Endothelial cell of umbilical vein (primary cell): ENCODE measurements at regions of chr1 and their contacts with region 1.

Region 1: GRCh38 chr1:219573960-219574359 is 38.9 kb downstream of the ZC3H11B start:
- DNase-seq: no peak
- H3K4me3 ChIP-seq: no peak overlapping the region
- H3K27ac ChIP-seq: no peak overlapping the region
- H3K4me1 ChIP-seq: no peaks in the 10 kb centered on the region
- H3K27me3 ChIP-seq: no peaks in the 10 kb centered on the region
- CTCF ChIP-seq: no peak
- POLR2A ChIP-seq: no peak

Region 2: DNA sequence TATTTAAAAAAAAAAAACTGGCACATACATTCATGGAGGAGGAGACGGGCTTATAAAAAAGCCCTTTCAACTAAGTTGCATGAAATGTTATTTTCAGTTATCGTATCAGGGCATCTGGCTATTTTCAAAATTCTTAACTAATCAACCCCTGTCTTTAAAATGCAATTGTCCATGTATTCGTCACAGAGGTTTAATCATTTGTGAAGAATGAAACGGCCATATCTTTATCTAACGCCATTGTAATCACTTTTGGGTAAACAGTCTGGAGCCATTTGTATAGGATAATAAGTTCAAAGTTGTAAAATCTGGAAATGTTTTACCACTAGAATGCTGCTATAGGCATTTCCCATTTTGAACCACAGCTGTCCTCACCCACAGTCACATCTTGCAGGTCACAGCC is 324.0 kb after region 1 on chr1:
- CTCF ChIA-PET with region 1: no interaction called
- POLR2A ChIA-PET with region 1: no interaction called
- dilution Hi-C with region 1: no loop called
- intact Hi-C with region 1: loop called (anchors 5 kb)
- DNase-seq: no peak
- H3K4me3 ChIP-seq: no peak overlapping the region
- H3K27ac ChIP-seq: no peak overlapping the region
- H3K4me1 ChIP-seq: peaks cover 4% of the 10 kb centered on the region
- H3K27me3 ChIP-seq: no peaks in the 10 kb centered on the region
- CTCF ChIP-seq: no peak
- POLR2A ChIP-seq: no peak

Region 3: DNA sequence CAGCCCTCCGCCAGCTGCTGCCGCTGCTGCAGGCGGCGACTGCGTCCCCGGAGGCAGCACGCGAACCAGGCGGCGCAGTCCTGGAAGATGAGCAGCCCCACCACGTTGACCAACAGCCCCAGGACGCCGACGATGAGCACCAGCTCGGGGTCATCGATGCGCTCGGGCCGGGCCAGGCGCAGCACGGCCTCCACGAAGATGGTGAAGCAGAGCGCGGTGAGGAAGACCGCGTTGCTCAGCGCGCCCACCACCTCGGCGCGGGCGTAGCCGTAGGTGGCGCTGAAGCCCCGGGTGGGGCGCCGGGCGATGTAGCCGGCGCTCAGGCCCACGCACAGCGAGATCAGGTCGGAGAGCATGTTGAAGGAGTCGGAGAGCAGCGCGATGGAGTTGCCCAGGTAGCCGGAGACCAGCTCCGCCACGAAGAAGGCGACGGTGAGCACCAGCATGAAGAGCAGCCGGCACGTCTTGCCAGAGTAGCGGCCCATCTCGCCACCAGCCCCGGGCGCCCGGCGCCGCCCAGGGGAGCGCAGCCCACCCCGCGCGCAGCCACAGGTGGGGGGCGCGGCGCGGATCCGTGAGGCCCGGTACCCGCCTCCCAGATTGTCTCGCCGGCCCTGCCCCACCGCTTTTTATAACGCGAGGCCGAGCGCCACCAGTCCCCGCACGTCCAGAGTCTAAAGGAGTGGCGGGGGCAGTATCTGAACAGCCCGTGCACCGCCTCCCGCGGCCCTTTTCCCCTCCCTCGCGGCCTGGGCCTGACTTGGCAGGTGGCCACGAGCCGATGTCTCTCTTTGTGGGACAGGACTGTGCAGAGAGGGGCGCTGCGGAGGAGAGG is 354.2 kb after region 1 on chr1 and contains the start of gene SLC30A10:
- CTCF ChIA-PET with region 1: no interaction called
- POLR2A ChIA-PET with region 1: no interaction called
- dilution Hi-C with region 1: no loop called
- intact Hi-C with region 1: no loop called
- DNase-seq: peak; percentile 9
- H3K4me3 ChIP-seq: peak within 1 kb of the TSS; percentile 1 to 29 (median 3)
- H3K27ac ChIP-seq: no peak within 1 kb of the TSS
- H3K4me1 ChIP-seq: peaks cover 8% of the 10 kb centered on the region
- H3K27me3 ChIP-seq: peaks cover 12 to 26% of the 10 kb centered on the region in 2 experiments
- CTCF ChIP-seq: peak in 1 of 2 donors; percentile 4
- POLR2A ChIP-seq: no peak
- total RNA-seq, gene SLC30A10: not detected in 2 replicates